Activated CD8-positive, alpha-beta memory T cell treated with anti-CD3 and anti-CD28 coated beads, Interleukin-2, amount 10 ng/mL, durations not matched to agents 7 days and 5 days (primary cell): ENCODE measurements at regions of chr9 and their contacts with region 1.

Region 1: DNA sequence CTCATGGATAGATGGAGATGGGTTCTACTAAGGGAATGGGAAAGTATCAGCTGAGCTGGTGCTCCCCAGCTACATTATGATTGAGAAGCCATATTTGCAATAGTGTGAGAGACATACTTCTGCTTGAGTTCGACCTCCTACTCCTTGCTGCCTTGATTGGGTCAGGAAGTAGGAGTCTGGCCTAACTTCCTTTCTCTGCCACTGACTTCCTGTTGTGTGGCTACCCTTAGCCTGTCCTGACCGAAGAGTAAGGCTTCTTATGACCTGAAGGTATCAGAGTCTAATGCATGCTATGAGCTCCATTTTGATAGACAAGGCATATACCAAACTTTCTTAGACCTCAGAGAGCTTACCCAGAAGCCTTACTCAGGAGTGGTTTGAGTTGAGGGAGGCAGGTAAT is 53.9 kb downstream of the OSTF1 start:
- DNase-seq: peak; percentile 68
- ATAC-seq: peak; percentile 75
- H3K4me3 Mint-ChIP-seq: peak overlapping the region; percentile 27
- H3K27ac Mint-ChIP-seq: peak overlapping the region; percentile 92
- H3K4me1 Mint-ChIP-seq: peaks cover 90% of the 10 kb centered on the region
- H3K27me3 Mint-ChIP-seq: no peaks in the 10 kb centered on the region

Region 2: GRCh38 chr9:75120686-75121085 is 21.5 kb before region 1 on chr9:
- CTCF ChIA-PET with region 1: no interaction called
- DNase-seq: no peak
- ATAC-seq: no peak
- H3K4me3 Mint-ChIP-seq: no peak overlapping the region
- H3K27ac Mint-ChIP-seq: no peak overlapping the region
- H3K4me1 Mint-ChIP-seq: peaks cover 68% of the 10 kb centered on the region
- H3K27me3 Mint-ChIP-seq: no peaks in the 10 kb centered on the region

Region 3: DNA sequence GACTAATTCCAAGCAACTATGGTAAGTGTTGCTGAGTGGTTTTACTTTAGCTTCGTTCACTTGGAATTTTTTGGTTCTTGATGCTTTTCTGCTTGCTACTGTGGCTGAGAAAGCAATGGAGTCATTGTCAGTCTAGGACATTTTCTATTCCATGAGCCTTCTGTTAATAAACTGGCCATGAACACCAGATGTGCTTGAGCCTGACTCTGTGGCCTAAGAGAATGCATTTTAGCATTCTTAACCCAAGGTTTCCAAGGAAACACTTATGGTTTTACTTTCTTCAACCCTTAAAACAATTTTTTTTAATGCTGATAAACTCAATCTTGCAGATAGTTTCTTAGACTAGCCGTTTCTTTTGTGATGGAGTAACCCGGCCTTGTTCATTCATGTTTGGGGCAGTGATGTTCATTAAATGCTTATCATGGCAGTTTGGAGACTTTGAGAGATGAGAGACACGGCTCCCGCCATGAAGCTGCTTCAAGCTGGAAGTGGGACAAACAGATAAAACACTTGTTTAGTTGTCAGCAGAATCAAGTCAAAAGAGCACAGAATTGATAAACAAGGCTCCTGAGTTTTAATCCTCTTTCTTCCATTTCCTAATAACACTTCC is 11.5 kb before region 1 on chr9:
- CTCF ChIA-PET with region 1: interaction called, 14 read pairs
- DNase-seq: no peak
- ATAC-seq: no peak
- H3K4me3 Mint-ChIP-seq: no peak overlapping the region
- H3K27ac Mint-ChIP-seq: peak overlapping the region; percentile 63
- H3K4me1 Mint-ChIP-seq: peaks cover 67% of the 10 kb centered on the region
- H3K27me3 Mint-ChIP-seq: no peaks in the 10 kb centered on the region

Region 4: DNA sequence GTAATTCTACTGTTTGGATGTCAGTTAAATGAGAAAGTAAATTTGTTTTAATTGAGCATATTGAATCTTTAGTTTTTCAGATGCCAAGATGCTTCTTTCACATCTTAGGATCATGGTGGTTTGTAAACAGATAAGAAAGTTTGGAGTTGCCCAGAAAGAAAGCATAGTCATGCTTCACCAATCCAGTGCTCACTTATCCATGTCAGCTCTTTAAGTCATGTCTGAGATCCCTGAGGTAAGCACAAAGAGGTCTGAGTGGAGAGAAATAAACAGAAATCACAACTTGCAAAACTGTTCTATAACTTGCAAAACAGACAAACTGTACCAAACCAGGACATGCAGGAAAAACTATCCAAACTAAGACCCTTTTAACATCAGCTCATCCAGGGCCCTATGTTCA is 33.8 kb after region 1 on chr9:
- CTCF ChIA-PET with region 1: no interaction called
- DNase-seq: no peak
- ATAC-seq: no peak
- H3K4me3 Mint-ChIP-seq: no peak overlapping the region
- H3K27ac Mint-ChIP-seq: peak overlapping the region; percentile 3
- H3K4me1 Mint-ChIP-seq: peaks cover 15% of the 10 kb centered on the region
- H3K27me3 Mint-ChIP-seq: no peaks in the 10 kb centered on the region